ENCODE measurements at regions of chr10 and their contacts with region 1.

Region 1: DNA sequence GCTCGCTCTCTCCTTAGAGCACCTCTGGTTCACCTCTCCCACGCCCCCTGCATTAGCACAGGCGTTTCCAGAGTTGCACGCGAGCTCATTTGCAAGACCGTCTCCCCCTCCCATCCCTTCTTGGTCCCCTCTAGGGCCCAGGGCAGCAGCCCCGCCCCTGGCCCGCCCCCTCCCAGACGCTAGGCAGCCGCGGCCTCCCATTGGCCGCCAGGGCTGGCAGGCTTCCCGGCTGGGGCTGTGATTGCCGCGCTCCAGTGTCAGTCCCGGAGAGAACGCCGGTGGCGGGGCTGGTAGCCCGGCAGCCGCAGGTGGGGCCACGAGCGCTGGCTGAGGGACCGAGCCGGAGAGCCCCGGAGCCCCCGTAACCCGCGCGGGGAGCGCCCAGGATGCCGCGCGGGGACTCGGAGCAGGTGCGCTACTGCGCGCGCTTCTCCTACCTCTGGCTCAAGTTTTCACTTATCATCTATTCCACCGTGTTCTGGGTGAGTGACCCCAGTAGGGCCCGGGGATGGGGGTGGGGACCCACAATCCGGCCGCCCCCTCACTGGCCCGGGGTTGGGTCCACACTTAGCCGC is at the start of gene TSPAN15:
- DNase-seq: peak; percentile 88 to 97
- H3K4me3 ChIP-seq: peak within 1 kb of the TSS; percentile 81
- H3K27ac ChIP-seq: peak within 1 kb of the TSS; percentile 95
- H3K4me1 ChIP-seq: peaks cover 87% of the 10 kb centered on the region
- H3K27me3 ChIP-seq: no peaks in the 10 kb centered on the region
- CTCF ChIP-seq: no peak
- total RNA-seq, gene TSPAN15: 97.0 and 108 TPM in 2 replicates

Region 2: DNA sequence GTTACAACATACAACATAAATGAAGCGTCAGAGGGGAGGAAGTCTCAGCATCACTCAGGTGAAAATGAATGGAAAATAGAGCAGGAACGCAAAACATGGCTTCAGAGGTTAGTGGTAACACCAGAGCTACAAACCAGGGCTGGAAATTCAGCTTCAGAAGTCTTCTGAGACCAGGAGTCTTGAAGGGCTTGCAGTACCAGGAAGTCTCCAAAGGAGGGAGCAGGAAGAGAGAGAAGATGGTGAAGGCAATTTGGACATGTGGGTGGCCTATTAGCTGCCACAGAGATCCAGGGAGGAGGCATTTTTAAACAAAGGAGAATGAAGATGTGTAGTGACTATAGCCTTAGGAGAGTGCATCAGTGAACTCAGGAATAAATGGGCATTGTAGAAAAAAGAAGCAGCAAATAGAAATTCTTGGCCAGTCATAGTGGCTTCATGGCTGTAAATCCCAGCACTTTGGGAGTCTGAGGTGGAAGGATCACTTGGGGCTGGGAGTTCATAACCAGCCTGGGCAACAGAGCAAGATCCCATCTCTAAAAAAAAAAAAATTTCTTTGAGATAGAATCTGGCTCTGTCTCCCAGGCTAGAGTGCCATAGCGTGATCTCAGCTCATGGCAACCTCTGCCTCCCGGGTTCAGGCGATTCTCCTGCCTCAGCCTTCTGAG is 900.4 kb before region 1 on chr10:
- CTCF ChIA-PET with region 1: no interaction called
- POLR2A ChIA-PET with region 1: interaction called, 13 read pairs
- intact Hi-C with region 1: no loop called
- DNase-seq: peak in 1 of 2 experiments; percentile 49
- H3K4me3 ChIP-seq: no peak overlapping the region
- H3K27ac ChIP-seq: no peak overlapping the region
- H3K4me1 ChIP-seq: peaks cover 18% of the 10 kb centered on the region
- H3K27me3 ChIP-seq: no peaks in the 10 kb centered on the region
- CTCF ChIP-seq: peak; percentile 79

Region 3: DNA sequence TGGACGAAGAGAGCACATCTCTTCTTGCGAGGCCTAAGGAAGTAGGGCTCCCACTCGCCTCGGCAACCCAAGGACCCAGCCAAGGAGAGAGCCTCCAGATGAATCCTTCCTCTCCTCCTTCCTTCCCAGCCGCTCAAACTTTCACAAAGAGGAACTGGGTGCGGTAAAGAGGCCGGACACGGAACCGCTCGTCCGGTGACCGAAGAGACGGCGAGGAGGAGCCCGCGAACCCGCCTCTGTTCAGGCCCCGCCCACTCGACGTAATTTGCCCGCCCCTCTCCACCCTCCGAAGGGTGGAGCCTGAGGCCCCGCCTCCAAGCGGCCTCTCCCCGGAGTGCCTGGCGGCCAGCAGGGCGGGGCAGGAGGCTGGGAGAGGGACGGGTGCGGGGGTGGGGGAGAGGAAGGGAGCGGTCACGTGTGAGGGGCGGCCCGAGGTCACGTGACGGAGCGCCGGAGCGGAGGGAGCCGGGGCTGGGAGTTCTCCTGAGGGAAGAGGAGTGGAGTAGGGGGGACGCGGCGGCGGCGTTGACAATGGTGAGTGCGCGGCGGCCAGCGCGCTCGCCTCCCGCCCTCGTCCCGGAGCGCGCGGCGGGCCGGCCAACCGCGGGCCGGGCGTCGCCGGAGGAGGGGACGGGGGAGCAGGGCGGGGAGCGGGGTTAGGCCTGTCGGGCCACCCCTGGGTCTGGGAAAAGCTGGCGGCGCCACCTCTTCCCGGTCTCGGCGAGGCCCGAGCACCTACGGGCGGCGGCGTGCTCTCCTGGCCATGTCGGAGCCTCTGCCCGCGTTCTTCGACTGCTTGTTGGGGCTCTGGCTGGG is 327.3 kb before region 1 on chr10 and contains the start of gene VPS26A:
- CTCF ChIA-PET with region 1: no interaction called
- POLR2A ChIA-PET with region 1: interaction called, 12 read pairs
- intact Hi-C with region 1: no loop called
- DNase-seq: peak; percentile 91 to 100
- H3K4me3 ChIP-seq: peak within 1 kb of the TSS; percentile 61
- H3K27ac ChIP-seq: peak within 1 kb of the TSS; percentile 78
- H3K4me1 ChIP-seq: peaks cover 19% of the 10 kb centered on the region
- H3K27me3 ChIP-seq: no peaks in the 10 kb centered on the region
- CTCF ChIP-seq: 0 out of 2 replicates have a peak, but pooled peaks have one; percentile 20
- total RNA-seq, gene VPS26A: 90.0 and 102 TPM in 2 replicates

Region 4: DNA sequence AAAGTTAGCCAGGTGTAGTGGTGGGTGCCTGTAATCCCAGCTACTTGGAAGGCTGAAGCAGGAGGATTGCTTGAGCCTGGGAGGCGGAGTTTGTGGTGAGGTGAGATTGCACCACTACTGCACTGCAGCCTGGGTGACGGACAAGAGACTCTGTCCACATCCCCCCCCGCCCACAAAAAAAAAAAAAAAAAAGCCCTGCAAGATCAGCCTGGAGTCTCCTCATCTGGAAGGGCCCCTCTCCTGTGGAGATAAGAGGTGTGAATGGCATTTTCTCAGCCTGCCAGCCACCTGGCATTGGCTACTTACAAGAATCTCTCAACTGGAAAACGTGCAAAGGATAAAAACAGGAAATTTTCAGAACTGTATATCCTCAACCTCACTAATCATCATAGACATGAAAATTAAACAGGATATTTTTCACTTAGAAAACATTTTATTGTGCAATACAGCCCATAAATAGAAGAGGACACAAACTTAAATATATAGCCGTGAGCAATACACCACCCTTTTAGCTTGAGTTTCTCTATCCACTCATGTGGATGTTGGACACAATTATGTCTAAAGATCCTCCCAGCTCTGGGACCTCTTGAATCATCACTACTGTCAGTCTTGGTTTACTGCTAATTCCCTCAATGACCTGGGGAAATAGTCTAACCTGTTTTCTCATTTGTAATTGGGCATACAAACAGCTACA is 11.3 kb before region 1 on chr10:
- CTCF ChIA-PET with region 1: interaction called, 33 read pairs
- POLR2A ChIA-PET with region 1: interaction called, 5 read pairs
- intact Hi-C with region 1: loop called (anchors 1 kb)
- DNase-seq: peak; percentile 81 to 96
- H3K4me3 ChIP-seq: peak overlapping the region; percentile 42; the same call in 1 of the 2 replicates
- H3K27ac ChIP-seq: peak overlapping the region; percentile 96
- H3K4me1 ChIP-seq: peaks cover 69% of the 10 kb centered on the region
- H3K27me3 ChIP-seq: no peaks in the 10 kb centered on the region
- CTCF ChIP-seq: 0 out of 2 replicates have a peak, but pooled peaks have one; percentile 4

Region 5: DNA sequence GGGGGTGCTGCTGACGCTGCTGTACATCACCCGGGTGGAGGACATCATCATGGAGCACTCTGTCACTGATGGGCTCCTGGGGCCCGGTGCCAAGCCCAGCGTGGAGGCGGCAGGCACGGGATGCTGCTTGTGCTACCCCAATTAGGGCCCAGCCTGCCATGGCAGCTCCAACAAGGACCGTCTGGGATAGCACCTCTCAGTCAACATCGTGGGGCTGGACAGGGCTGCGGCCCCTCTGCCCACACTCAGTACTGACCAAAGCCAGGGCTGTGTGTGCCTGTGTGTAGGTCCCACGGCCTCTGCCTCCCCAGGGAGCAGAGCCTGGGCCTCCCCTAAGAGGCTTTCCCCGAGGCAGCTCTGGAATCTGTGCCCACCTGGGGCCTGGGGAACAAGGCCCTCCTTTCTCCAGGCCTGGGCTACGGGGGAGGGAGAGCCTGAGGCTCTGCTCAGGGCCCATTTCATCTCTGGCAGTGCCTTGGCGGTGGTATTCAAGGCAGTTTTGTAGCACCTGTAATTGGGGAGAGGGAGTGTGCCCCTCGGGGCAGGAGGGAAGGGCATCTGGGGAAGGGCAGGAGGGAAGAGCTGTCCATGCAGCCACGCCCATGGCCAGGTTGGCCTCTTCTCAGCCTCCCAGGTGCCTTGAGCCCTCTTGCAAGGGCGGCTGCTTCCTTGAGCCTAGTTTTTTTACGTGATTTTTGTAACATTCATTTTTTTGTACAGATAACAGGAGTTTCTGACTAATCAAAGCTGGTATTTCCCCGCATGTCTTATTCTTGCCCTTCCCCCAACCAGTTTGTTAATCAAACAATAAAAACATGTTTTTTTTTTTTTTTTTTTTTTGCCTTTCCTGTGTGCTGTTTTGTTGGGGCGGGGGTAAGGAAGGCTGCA is 55.8 kb after region 1 on chr10:
- CTCF ChIA-PET with region 1: interaction called, 11 read pairs
- POLR2A ChIA-PET with region 1: no interaction called
- intact Hi-C with region 1: no loop called
- DNase-seq: peak; percentile 38 to 68
- H3K4me3 ChIP-seq: no peak overlapping the region
- H3K27ac ChIP-seq: peak overlapping the region; percentile 52
- H3K4me1 ChIP-seq: peaks cover 11% of the 10 kb centered on the region
- H3K27me3 ChIP-seq: no peaks in the 10 kb centered on the region
- CTCF ChIP-seq: no peak

Region 6: GRCh38 chr10:69515699-69516259 is 64.5 kb after region 1 on chr10:
- CTCF ChIA-PET with region 1: interaction called, 11 read pairs
- POLR2A ChIA-PET with region 1: no interaction called
- intact Hi-C with region 1: no loop called
- DNase-seq: peak; percentile 57 to 74
- H3K4me3 ChIP-seq: no peak overlapping the region
- H3K27ac ChIP-seq: no peak overlapping the region
- H3K4me1 ChIP-seq: no peaks in the 10 kb centered on the region
- H3K27me3 ChIP-seq: no peaks in the 10 kb centered on the region
- CTCF ChIP-seq: peak; percentile 95

Measured in PC-9 (cell line).